Left colon (tissue), 2 donors: ENCODE measurements at regions of chr4 and their contacts with region 1.

Region 1: GRCh38 chr4:114386637-114387233 is 211.9 kb upstream of the UGT8 start:
- DNase-seq: no peak
- ATAC-seq: peak; percentile 50

Region 2: GRCh38 chr4:113773014-113773413 is 613.7 kb before region 1 on chr4:
- intact Hi-C with region 1: loop called in 1 of 2 experiments (anchors 10 kb)
- DNase-seq: no peak
- ATAC-seq: no peak

Region 3: GRCh38 chr4:114659386-114660008 is 272.8 kb after region 1 on chr4:
- intact Hi-C with region 1: loop called in 1 of 2 experiments (anchors 2 kb)
- DNase-seq: peak; percentile 58 to 61
- ATAC-seq: peak; percentile 96

Region 4: GRCh38 chr4:114694770-114695169 is 308.0 kb after region 1 on chr4:
- intact Hi-C with region 1: loop called in 1 of 2 experiments (anchors 5 kb)
- DNase-seq: no peak
- ATAC-seq: peak; percentile 42